Activated T-helper 2 cell treated with anti-CD3 and anti-CD28 coated beads, Interferon-gamma antibody, Interleukin-2, Interleukin-4, amounts not matched to agents 10 μg/mL and 5 μg/mL and 100 μg/mL, durations not matched to agents 14 hours and 24 hours and 36 hours (primary cell): ENCODE measurements at regions of chr11 and their contacts with region 1.

Region 1: GRCh38 chr11:36478700-36479329 is 31.3 kb downstream of the TRAF6 start:
- DNase-seq: no peak
- H3K4me3 Mint-ChIP-seq: no peak overlapping the region
- H3K27ac Mint-ChIP-seq: no peak overlapping the region
- H3K4me1 Mint-ChIP-seq: peaks cover 9% of the 10 kb centered on the region
- H3K27me3 Mint-ChIP-seq: peaks cover 4% of the 10 kb centered on the region

Region 2: DNA sequence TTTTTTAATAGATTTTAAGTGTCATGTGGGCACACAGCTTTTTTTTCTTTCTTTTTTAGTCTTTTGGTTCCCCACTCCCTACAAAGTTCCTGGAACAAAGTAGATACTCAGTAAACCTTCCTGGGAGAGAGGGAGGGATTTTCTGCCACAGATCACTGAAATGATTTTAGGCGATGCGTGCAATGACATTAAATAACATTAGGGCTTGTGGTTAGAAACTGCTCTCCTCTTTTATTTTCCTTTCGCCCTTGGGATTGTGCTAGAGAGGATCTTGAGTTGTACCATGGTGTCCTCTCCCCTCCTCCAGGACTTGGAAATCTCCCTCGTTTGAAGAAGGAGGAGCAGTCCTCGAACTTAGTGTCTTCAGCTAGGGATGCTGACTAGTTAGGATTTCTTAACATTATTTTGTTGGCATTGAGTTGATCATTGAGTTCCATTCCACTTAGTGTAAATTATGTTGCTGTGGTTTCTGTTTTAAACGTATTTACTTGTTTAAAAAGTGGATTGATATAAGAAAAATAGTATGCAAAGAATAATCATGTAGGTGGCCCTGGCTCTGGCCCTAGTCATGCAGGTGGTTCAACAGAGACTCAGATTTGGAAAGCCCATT is 57.2 kb before region 1 on chr11:
- intact Hi-C with region 1: loop called (anchors 2 kb)
- DNase-seq: no peak
- H3K4me3 Mint-ChIP-seq: peak overlapping the region; percentile 10
- H3K27ac Mint-ChIP-seq: peak overlapping the region; percentile 70
- H3K4me1 Mint-ChIP-seq: peaks cover 56% of the 10 kb centered on the region
- H3K27me3 Mint-ChIP-seq: peaks cover 8% of the 10 kb centered on the region